ENCODE measurements at regions of chr3 and their contacts with region 1.

Region 1: GRCh38 chr3:111998636-111999483 is at the start of gene TAGLN3:
- DNase-seq: no peak
- H3K4me3 ChIP-seq: no peak within 1 kb of the TSS
- H3K4me3 Mint-ChIP-seq: peak within 1 kb of the TSS; percentile 70 to 84 (median 74)
- H3K27ac ChIP-seq: no peak within 1 kb of the TSS
- H3K27ac Mint-ChIP-seq: peak within 1 kb of the TSS in 1 of 7 donors; percentile 31
- H3K4me1 ChIP-seq: peaks cover 22% of the 10 kb centered on the region
- H3K4me1 Mint-ChIP-seq: peaks cover 20 to 28% (median 24%) of the 10 kb centered on the region in 4 donors
- H3K27me3 ChIP-seq: no peaks in the 10 kb centered on the region
- H3K27me3 Mint-ChIP-seq: no peaks in the 10 kb centered on the region
- total RNA-seq, gene TAGLN3: not detected

Region 2: DNA sequence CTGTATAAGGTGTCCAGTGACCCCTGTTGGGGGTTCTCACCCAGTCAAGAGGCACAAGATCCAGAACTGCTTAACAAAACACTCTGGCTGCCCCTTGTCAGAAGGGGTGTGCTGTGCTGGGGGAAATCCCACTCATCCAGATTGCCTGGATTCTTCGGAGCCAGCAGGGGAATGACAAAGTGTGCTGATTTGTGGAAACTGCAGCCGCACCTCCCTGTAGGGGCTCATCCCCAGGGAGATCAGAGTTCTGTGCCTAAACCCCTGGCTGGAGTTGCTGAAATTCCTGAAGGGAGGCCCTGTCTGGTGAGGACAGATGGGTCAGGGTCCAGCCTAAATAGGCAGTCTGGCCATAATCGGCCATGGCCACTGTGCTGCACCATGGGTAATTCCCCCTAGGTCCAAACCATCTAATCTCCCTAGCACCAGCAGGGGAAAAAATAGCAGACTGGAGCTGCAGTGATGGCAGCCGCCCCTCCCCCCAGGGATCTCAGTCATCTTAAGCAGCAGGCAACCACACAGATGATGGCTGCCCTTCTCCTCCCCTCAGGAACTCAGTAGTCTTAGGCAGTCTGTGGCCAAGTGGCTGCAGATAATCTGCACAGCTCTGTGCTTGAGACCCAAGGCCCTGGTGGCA is 525.4 kb before region 1 on chr3:
- CTCF ChIA-PET with region 1: no interaction called
- POLR2A ChIA-PET with region 1: no interaction called
- intact Hi-C with region 1: no loop called
- DNase-seq: no peak
- H3K4me3 ChIP-seq: no peak overlapping the region
- H3K4me3 Mint-ChIP-seq: no peak overlapping the region
- H3K27ac ChIP-seq: no peak overlapping the region
- H3K27ac Mint-ChIP-seq: no peak overlapping the region
- H3K4me1 ChIP-seq: no peaks in the 10 kb centered on the region
- H3K4me1 Mint-ChIP-seq: no peaks in the 10 kb centered on the region
- H3K27me3 ChIP-seq: no peaks in the 10 kb centered on the region
- H3K27me3 Mint-ChIP-seq: peaks cover 1 to 2% of the 10 kb centered on the region in 2 donors

Region 3: GRCh38 chr3:111895079-111895478 is 103.8 kb before region 1 on chr3:
- CTCF ChIA-PET with region 1: no interaction called
- POLR2A ChIA-PET with region 1: no interaction called
- intact Hi-C with region 1: no loop called
- DNase-seq: no peak
- H3K4me3 ChIP-seq: no peak overlapping the region
- H3K4me3 Mint-ChIP-seq: no peak overlapping the region
- H3K27ac ChIP-seq: no peak overlapping the region
- H3K27ac Mint-ChIP-seq: no peak overlapping the region
- H3K4me1 ChIP-seq: no peaks in the 10 kb centered on the region
- H3K4me1 Mint-ChIP-seq: peaks cover 0 to 6% (median 2%) of the 10 kb centered on the region in 4 donors
- H3K27me3 ChIP-seq: no peaks in the 10 kb centered on the region
- H3K27me3 Mint-ChIP-seq: no peaks in the 10 kb centered on the region

Region 4: DNA sequence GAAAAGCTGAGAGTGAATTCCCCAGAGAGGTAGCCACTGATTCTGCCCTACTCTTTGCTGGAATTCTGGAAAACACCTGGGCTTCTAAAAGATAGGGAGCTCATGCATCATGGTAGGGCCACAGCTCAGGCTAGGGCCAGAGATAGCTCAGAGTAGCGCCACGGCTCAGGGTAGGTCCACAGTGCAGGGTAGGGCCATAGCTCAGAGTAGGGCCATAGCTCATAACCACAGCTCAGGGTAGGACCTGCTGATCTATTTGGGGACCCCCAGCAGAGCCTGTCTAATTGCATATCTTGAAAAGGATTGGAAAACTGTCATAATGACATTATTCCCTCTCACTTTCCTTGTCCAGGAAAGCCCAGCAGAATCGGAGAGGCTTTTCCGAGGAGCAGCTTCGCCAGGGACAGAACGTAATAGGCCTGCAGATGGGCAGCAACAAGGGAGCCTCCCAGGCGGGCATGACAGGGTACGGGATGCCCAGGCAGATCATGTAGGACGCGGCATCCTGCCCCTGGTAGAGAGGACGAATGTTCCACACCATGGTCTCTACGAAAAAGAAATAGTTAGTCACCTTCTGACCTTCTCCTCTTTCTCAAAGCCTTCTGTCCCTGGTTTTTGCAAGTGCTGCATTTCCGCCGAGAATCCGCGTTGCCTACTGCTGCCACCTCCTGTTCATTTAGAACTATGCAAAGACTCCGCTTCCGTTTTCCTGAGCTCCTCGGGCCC is 14.4 kb after region 1 on chr3:
- CTCF ChIA-PET with region 1: interaction called, 207 read pairs
- POLR2A ChIA-PET with region 1: interaction called, 4 read pairs
- intact Hi-C with region 1: no loop called
- DNase-seq: peak; percentile 46 to 54 (median 51)
- H3K4me3 ChIP-seq: peak overlapping the region in 1 of 2 donors; percentile 19
- H3K4me3 Mint-ChIP-seq: peak overlapping the region in 5 of 8 donors; percentile 3 to 51 (median 33)
- H3K27ac ChIP-seq: no peak overlapping the region
- H3K27ac Mint-ChIP-seq: peak overlapping the region in 3 of 7 donors; percentile 4 to 57 (median 56)
- H3K4me1 ChIP-seq: peaks cover 4% of the 10 kb centered on the region
- H3K4me1 Mint-ChIP-seq: peaks cover 5 to 12% (median 8%) of the 10 kb centered on the region in 4 donors
- H3K27me3 ChIP-seq: no peaks in the 10 kb centered on the region
- H3K27me3 Mint-ChIP-seq: no peaks in the 10 kb centered on the region

Measured in CD4-positive, alpha-beta memory T cell (primary cell).